ENCODE measurements at regions of chrX and their contacts with region 1.

Region 1: GRCh38 chrX:118459494-118459893 is 36.1 kb upstream of the DOCK11 start:
- DNase-seq: peak in 1 of 2 experiments; percentile 28
- H3K4me3 ChIP-seq: no peak overlapping the region
- H3K4me3 Mint-ChIP-seq: no peak overlapping the region
- H3K27ac Mint-ChIP-seq: no peak overlapping the region
- H3K4me1 ChIP-seq: no peaks in the 10 kb centered on the region
- H3K4me1 Mint-ChIP-seq: no peaks in the 10 kb centered on the region
- H3K27me3 ChIP-seq: no peaks in the 10 kb centered on the region
- H3K27me3 Mint-ChIP-seq: no peaks in the 10 kb centered on the region
- CTCF ChIP-seq: peak; percentile 39 to 57

Region 2: DNA sequence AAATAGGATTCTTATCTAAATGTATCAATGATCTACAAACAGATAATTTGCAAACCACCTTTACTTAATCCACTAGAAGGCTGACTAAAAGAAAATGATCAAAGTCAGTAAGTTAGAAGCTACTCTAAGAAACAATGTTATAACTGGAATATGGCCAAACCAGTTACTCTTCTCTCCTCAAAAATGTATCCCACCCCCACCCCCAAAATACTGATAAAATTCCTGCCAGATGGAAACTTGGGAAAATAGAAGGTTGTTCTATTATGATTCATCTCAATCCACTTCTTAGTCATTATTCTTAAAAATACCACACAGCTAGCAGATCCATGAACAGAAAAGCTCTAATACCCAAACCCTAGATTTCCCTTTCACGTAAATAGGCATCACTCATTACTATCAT is 549.3 kb before region 1 on chrX:
- CTCF ChIA-PET with region 1: no interaction called
- POLR2A ChIA-PET with region 1: no interaction called
- intact Hi-C with region 1: no loop called
- DNase-seq: no peak
- H3K4me3 ChIP-seq: no peak overlapping the region
- H3K4me3 Mint-ChIP-seq: no peak overlapping the region
- H3K27ac Mint-ChIP-seq: no peak overlapping the region
- H3K4me1 ChIP-seq: no peaks in the 10 kb centered on the region
- H3K4me1 Mint-ChIP-seq: no peaks in the 10 kb centered on the region
- H3K27me3 ChIP-seq: no peaks in the 10 kb centered on the region
- H3K27me3 Mint-ChIP-seq: no peaks in the 10 kb centered on the region
- CTCF ChIP-seq: no peak

Region 3: GRCh38 chrX:118603981-118604380 is 144.5 kb after region 1 on chrX:
- CTCF ChIA-PET with region 1: interaction called, 45 read pairs
- POLR2A ChIA-PET with region 1: interaction called, 4 read pairs
- intact Hi-C with region 1: loop called (anchors 1 kb)
- DNase-seq: peak; percentile 56
- H3K4me3 ChIP-seq: no peak overlapping the region
- H3K4me3 Mint-ChIP-seq: peak overlapping the region; percentile 63
- H3K27ac Mint-ChIP-seq: peak overlapping the region; percentile 25
- H3K4me1 ChIP-seq: no peaks in the 10 kb centered on the region
- H3K4me1 Mint-ChIP-seq: peaks cover 7% of the 10 kb centered on the region
- H3K27me3 ChIP-seq: no peaks in the 10 kb centered on the region
- H3K27me3 Mint-ChIP-seq: no peaks in the 10 kb centered on the region
- CTCF ChIP-seq: peak; percentile 39 to 64